Caco-2 (cell line): ENCODE measurements at regions of chr15 and their contacts with region 1.

Region 1: GRCh38 chr15:92277776-92278175 is 115.9 kb upstream of the ST8SIA2 start:
- DNase-seq: no peak
- H3K4me3 ChIP-seq: no peak overlapping the region
- H3K4me3 Mint-ChIP-seq: no peak overlapping the region
- H3K27ac Mint-ChIP-seq: no peak overlapping the region
- H3K4me1 ChIP-seq: no peaks in the 10 kb centered on the region
- H3K4me1 Mint-ChIP-seq: no peaks in the 10 kb centered on the region
- H3K27me3 ChIP-seq: no peaks in the 10 kb centered on the region
- H3K27me3 Mint-ChIP-seq: peaks cover 26% of the 10 kb centered on the region
- CTCF ChIP-seq: no peak

Region 2: DNA sequence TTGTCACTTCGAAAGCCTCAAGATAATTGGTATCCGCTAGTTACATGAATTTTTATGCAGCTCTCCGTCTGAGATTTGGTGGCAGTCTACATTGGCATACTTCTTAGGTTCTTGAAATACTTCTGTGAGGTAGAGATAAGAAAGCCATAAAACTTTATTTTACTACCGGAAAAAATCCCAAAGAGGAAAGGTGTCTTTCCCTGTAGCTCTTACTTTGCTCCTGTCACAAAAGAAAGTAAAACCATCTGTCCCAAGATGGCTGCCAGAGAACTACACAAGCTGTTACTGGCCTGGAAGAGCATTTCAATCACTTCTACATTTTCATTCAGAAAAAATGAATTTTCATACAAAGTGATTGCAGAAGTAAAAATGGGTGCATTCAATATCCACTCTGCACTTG is 98.9 kb before region 1 on chr15:
- CTCF ChIA-PET with region 1: no interaction called
- POLR2A ChIA-PET with region 1: no interaction called
- intact Hi-C with region 1: no loop called
- DNase-seq: peak in 1 of 2 experiments; percentile 11
- H3K4me3 ChIP-seq: no peak overlapping the region
- H3K4me3 Mint-ChIP-seq: peak overlapping the region; percentile 15
- H3K27ac Mint-ChIP-seq: no peak overlapping the region
- H3K4me1 ChIP-seq: peaks cover 12% of the 10 kb centered on the region
- H3K4me1 Mint-ChIP-seq: peaks cover 7% of the 10 kb centered on the region
- H3K27me3 ChIP-seq: no peaks in the 10 kb centered on the region
- H3K27me3 Mint-ChIP-seq: no peaks in the 10 kb centered on the region
- CTCF ChIP-seq: no peak

Region 3: DNA sequence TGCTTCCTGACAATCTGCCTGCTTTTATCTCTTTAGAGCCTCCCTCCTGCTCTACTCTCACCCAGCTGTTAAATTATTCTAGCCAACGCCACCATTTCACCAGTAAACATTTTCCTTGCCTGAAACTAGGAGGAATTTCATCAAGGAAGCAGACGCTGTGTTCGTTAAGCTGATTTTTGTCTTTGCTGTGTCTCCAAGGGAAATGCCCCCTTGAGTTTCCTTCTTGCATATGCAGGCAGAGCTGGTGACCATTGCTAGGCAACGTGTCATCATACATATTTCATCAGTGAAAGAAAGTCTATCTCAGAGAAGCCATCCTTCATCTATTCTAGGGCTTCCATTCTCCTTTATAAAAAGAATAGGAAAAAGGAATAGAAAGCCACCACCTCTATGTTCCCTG is 28.9 kb after region 1 on chr15:
- CTCF ChIA-PET with region 1: no interaction called
- POLR2A ChIA-PET with region 1: no interaction called
- intact Hi-C with region 1: loop called (anchors 1 kb)
- DNase-seq: peak in 1 of 2 experiments; percentile 33
- H3K4me3 ChIP-seq: no peak overlapping the region
- H3K4me3 Mint-ChIP-seq: no peak overlapping the region
- H3K27ac Mint-ChIP-seq: peak overlapping the region; percentile 19
- H3K4me1 ChIP-seq: no peaks in the 10 kb centered on the region
- H3K4me1 Mint-ChIP-seq: no peaks in the 10 kb centered on the region
- H3K27me3 ChIP-seq: no peaks in the 10 kb centered on the region
- H3K27me3 Mint-ChIP-seq: peaks cover 17% of the 10 kb centered on the region
- CTCF ChIP-seq: peak in 1 of 2 experiments; percentile 29

Region 4: GRCh38 chr15:92492551-92493115 is 214.9 kb after region 1 on chr15:
- CTCF ChIA-PET with region 1: no interaction called
- POLR2A ChIA-PET with region 1: no interaction called
- intact Hi-C with region 1: no loop called
- DNase-seq: no peak
- H3K4me3 ChIP-seq: no peak overlapping the region
- H3K4me3 Mint-ChIP-seq: no peak overlapping the region
- H3K27ac Mint-ChIP-seq: no peak overlapping the region
- H3K4me1 ChIP-seq: no peaks in the 10 kb centered on the region
- H3K4me1 Mint-ChIP-seq: peaks cover 6% of the 10 kb centered on the region
- H3K27me3 ChIP-seq: peaks cover 4% of the 10 kb centered on the region; the same call in 1 of the 2 replicates
- H3K27me3 Mint-ChIP-seq: peaks cover 24% of the 10 kb centered on the region
- CTCF ChIP-seq: no peak